ENCODE measurements at regions of chr12 and their contacts with region 1.

Region 1: DNA sequence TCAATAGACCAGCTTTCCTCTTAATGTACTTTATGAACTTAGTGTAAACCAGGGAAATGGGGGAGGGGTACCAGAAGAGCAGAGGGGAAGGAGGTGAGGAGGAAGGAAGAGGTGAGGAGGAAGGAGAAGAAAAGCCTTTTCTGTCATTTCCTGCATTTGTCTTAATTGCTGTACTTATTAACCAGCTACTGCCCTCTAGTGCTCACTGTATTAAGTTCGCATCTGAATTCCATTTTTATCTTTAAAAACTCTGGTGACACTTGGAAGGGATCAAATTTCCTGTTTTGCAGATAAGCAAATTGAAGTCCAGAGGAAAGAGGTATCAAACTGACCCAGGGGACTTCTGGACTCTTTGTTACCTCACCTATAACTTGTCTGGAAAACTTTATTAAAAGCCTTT is 22.2 kb downstream of the MANSC1 start:
- H3K4me3 Mint-ChIP-seq: no peak overlapping the region
- H3K27ac Mint-ChIP-seq: no peak overlapping the region
- H3K4me1 Mint-ChIP-seq: peaks cover 7% of the 10 kb centered on the region
- H3K27me3 Mint-ChIP-seq: peaks cover 5% of the 10 kb centered on the region

Region 2: DNA sequence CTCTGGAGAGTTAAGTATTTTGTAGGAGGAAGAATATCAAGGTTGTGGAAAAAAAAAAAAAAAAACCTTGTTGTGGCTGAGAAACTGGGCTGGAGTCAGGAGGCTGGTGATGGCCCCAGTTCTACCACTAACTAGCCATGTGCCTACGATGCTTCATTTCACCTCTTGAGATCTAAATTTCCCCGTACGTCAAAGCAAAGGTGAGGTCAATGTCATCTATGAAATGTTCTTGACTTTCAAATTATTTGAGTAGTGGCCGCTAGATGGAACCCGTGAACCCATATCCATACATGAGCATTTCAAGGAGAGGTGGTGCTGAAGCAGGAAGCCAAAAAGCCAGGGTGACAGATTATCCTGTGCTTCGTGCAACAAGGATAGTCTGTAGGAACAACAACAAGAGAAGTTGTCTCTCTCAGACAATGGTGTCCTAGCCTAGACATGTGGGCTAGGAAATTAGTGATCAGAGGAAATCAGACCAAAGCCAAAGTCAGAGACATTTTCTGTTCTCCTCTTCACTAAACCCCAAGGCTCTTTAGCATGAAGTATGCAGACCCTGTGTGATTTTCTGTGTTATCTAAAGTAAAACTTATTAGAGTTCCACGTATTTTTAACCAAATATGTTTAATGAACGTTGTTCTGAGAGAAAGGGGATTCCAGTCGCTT is 773.8 kb before region 1 on chr12:
- intact Hi-C with region 1: loop called (anchors 5 kb)
- H3K4me3 Mint-ChIP-seq: no peak overlapping the region
- H3K27ac Mint-ChIP-seq: no peak overlapping the region
- H3K4me1 Mint-ChIP-seq: peaks cover 43% of the 10 kb centered on the region
- H3K27me3 Mint-ChIP-seq: no peaks in the 10 kb centered on the region

Region 3: DNA sequence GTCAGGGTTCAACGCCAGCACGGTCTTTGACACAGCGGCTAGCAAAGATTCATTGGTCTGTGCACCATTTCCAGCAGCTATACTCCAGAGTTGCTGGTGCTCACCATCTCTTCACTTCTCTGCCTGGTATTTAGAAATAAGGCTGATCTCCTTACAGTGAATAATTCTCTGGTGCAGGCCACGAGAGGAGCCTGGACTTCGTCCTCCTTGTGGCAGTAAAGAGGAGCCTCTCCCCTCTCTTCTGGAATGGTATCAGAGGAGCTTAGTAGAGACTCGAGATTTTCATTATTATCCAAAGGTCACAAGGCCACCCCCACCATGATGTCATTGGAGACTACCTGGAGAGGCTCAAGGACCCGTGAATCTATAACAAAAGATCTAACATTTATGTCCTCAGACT is 287.9 kb before region 1 on chr12:
- intact Hi-C with region 1: loop called (anchors 5 kb)
- H3K4me3 Mint-ChIP-seq: no peak overlapping the region
- H3K27ac Mint-ChIP-seq: no peak overlapping the region
- H3K4me1 Mint-ChIP-seq: peaks cover 5% of the 10 kb centered on the region
- H3K27me3 Mint-ChIP-seq: no peaks in the 10 kb centered on the region